H1 (cell line): ENCODE measurements at regions of chr3 and their contacts with region 1.

Region 1: GRCh38 chr3:112642912-112643506 is 2.1 kb upstream of the CCDC80 start:
- DNase-seq: peak; percentile 54 to 83
- H3K4me3 ChIP-seq: peak overlapping the region in 1 of 4 experiments; percentile 25; a peak in 1 of 8 replicates
- H3K27ac ChIP-seq: no peak overlapping the region
- H3K4me1 ChIP-seq: peaks cover 7 to 22% (median 16%) of the 10 kb centered on the region in 4 experiments; a peak in 6 of 7 replicates
- H3K27me3 ChIP-seq: no peaks in the 10 kb centered on the region
- CTCF ChIP-seq: peak; percentile 80 to 93 (median 87)
- EP300 ChIP-seq: no peak; a peak in 1 of 3 replicates
- POLR2A ChIP-seq: no peak
- RAD21 ChIP-seq: peak; percentile 96 to 98

Region 2: DNA sequence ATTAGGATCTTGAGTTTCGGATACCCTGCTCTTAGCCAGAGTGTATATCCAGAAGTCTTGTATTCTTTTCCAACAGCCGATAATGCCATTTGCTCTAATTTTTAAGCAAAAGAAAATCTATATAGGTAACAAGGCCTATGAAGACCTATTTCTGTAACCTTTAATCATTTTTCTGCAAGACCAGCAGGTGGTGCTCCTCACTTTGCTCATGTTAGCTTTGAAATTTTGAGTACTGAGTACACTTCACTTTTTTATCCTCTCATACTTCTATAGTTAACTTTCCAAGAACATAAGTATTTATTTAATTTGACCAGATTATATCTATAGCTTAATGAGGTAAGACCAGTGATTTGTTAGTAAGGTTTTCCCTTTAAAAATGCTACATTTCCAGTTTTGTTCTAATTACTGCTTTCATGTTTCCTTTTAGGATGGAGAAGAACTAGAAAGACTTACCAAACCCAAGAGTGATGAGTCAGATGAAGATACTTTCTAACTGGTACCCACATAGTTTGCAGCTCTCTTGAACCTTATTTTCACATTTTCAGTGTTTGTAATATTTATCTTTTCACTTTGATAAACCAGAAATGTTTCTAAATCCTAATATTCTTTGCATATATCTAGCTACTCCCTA is 60.6 kb before region 1 on chr3:
- CTCF ChIA-PET with region 1: interaction called, 25 read pairs
- POLR2A ChIA-PET with region 1: interaction called, 9 read pairs
- DNase-seq: no peak
- H3K4me3 ChIP-seq: no peak overlapping the region
- H3K27ac ChIP-seq: no peak overlapping the region
- H3K4me1 ChIP-seq: no peaks in the 10 kb centered on the region; a peak in 1 of 7 replicates
- H3K27me3 ChIP-seq: no peaks in the 10 kb centered on the region
- CTCF ChIP-seq: peak in 2 of 3 experiments; percentile 30 to 47; a peak in 2 of 4 replicates
- EP300 ChIP-seq: no peak
- POLR2A ChIP-seq: no peak
- RAD21 ChIP-seq: peak; percentile 74 to 80

Region 3: GRCh38 chr3:112667599-112667998 is 24.6 kb after region 1 on chr3:
- CTCF ChIA-PET with region 1: interaction called, 14 read pairs
- POLR2A ChIA-PET with region 1: interaction called, 4 read pairs
- DNase-seq: no peak
- H3K4me3 ChIP-seq: no peak overlapping the region
- H3K27ac ChIP-seq: no peak overlapping the region
- H3K4me1 ChIP-seq: no peaks in the 10 kb centered on the region
- H3K27me3 ChIP-seq: no peaks in the 10 kb centered on the region
- CTCF ChIP-seq: peak in 1 of 3 experiments; percentile 18; a peak in 1 of 4 replicates
- EP300 ChIP-seq: no peak
- POLR2A ChIP-seq: no peak
- RAD21 ChIP-seq: no peak

Region 4: GRCh38 chr3:112734718-112735350 is 91.8 kb after region 1 on chr3:
- CTCF ChIA-PET with region 1: interaction called, 51 read pairs
- POLR2A ChIA-PET with region 1: interaction called, 8 read pairs
- DNase-seq: peak; percentile 70 to 92
- H3K4me3 ChIP-seq: no peak overlapping the region
- H3K27ac ChIP-seq: no peak overlapping the region
- H3K4me1 ChIP-seq: no peaks in the 10 kb centered on the region
- H3K27me3 ChIP-seq: no peaks in the 10 kb centered on the region
- CTCF ChIP-seq: peak; percentile 37 to 82 (median 81)
- EP300 ChIP-seq: no peak
- POLR2A ChIP-seq: no peak
- RAD21 ChIP-seq: peak; percentile 95 to 96

Region 5: GRCh38 chr3:112778391-112778948 is 135.5 kb after region 1 on chr3:
- CTCF ChIA-PET with region 1: no interaction called
- POLR2A ChIA-PET with region 1: no interaction called
- DNase-seq: no peak
- H3K4me3 ChIP-seq: no peak overlapping the region
- H3K27ac ChIP-seq: no peak overlapping the region
- H3K4me1 ChIP-seq: no peaks in the 10 kb centered on the region
- H3K27me3 ChIP-seq: no peaks in the 10 kb centered on the region
- CTCF ChIP-seq: no peak
- EP300 ChIP-seq: no peak
- POLR2A ChIP-seq: no peak
- RAD21 ChIP-seq: no peak

Region 6: DNA sequence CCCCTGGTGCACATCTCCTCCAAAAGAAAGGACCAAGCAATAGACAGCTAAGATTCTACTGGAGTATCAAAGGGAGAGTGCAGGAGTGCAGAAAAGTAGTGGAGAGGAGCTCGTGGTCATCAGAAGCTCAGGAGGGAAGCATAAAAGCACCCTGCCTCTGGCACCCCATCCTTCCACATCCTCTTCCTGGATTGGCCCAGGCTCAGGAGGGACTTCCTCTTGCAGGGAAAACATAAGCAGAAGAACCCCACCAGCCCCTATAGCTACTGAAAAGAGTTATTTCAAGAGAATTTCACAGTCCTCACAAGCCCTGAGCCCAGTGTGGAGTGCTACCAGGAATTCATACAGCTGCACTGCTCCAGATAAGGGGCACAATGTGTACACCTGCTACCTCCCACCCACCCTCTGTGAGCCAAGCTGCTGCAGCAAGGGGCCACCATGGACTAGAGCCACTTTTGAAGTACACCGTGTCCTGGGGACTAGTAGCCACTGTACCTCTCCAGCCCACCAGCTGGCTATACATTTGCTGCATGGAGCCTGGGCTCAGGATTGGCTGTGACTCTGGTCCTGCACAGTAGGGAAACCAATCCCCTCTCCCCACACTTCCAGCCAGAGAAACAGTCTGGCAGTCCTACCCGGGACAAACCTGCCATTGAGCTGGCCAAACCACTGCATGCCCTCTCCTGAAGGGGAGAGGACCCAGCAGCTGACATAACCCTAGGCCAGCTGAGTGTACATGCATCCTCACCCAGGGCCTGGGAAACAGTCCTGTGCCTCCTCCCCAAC is 288.9 kb after region 1 on chr3:
- CTCF ChIA-PET with region 1: no interaction called
- POLR2A ChIA-PET with region 1: no interaction called
- DNase-seq: no peak
- H3K4me3 ChIP-seq: no peak overlapping the region
- H3K27ac ChIP-seq: no peak overlapping the region
- H3K4me1 ChIP-seq: no peaks in the 10 kb centered on the region
- H3K27me3 ChIP-seq: no peaks in the 10 kb centered on the region
- CTCF ChIP-seq: no peak
- EP300 ChIP-seq: no peak
- POLR2A ChIP-seq: no peak
- RAD21 ChIP-seq: no peak

Region 7: GRCh38 chr3:112979240-112979832 is 336.3 kb after region 1 on chr3:
- CTCF ChIA-PET with region 1: interaction called, 40 read pairs
- POLR2A ChIA-PET with region 1: interaction called, 4 read pairs
- DNase-seq: no peak
- H3K4me3 ChIP-seq: no peak overlapping the region
- H3K27ac ChIP-seq: no peak overlapping the region
- H3K4me1 ChIP-seq: no peaks in the 10 kb centered on the region
- H3K27me3 ChIP-seq: no peaks in the 10 kb centered on the region
- CTCF ChIP-seq: peak in 2 of 3 experiments; percentile 21 to 40; a peak in 2 of 4 replicates
- EP300 ChIP-seq: no peak
- POLR2A ChIP-seq: no peak
- RAD21 ChIP-seq: peak in 1 of 2 experiments; percentile 53

Region 8: DNA sequence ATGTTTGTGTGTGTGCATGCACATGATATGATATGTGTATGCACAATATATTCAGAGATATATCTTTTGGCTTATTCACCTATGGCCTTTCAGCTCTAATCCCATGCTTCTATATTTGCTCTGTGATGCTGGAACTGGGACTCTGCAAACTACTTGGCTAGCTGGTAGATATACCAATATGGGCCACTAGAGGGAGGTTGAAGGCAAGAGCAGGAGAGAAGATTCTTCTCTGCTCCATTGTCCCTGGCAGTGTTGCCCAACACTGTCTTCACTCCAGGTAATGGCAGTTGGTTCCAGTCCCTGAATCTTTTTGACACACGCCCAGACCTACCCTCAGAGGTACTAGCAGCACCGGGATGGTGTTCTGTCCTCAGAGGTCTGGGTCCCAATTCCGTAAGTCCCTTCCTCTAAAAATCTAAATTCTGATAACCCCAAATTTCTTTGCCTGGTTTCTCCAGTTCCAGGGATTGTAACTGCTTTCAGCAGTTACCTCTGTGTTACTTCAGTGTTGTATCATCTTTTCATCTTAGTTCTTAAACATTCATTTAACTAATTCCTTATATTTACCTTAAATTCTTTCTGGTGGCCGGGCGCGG is 392.5 kb after region 1 on chr3:
- CTCF ChIA-PET with region 1: interaction called, 12 read pairs
- POLR2A ChIA-PET with region 1: no interaction called
- DNase-seq: peak in 1 of 2 experiments; percentile 55
- H3K4me3 ChIP-seq: no peak overlapping the region
- H3K27ac ChIP-seq: no peak overlapping the region
- H3K4me1 ChIP-seq: no peaks in the 10 kb centered on the region
- H3K27me3 ChIP-seq: no peaks in the 10 kb centered on the region
- CTCF ChIP-seq: peak; percentile 33 to 91 (median 72)
- EP300 ChIP-seq: no peak
- POLR2A ChIP-seq: no peak
- RAD21 ChIP-seq: peak; percentile 73 to 80